Aorta (tissue), 5 donors: ENCODE measurements at regions of chr22 and their contacts with region 1.

Region 1: GRCh38 chr22:44497218-44497904 is 672 bp downstream of the RTL6 start:
- DNase-seq: peak in 1 of 2 donors; percentile 56
- ATAC-seq: peak; percentile 34
- H3K4me3 ChIP-seq: peak overlapping the region; percentile 35 to 60
- H3K27ac ChIP-seq: no peak overlapping the region
- H3K4me1 ChIP-seq: no peaks in the 10 kb centered on the region
- H3K27me3 ChIP-seq: no peaks in the 10 kb centered on the region

Region 2: DNA sequence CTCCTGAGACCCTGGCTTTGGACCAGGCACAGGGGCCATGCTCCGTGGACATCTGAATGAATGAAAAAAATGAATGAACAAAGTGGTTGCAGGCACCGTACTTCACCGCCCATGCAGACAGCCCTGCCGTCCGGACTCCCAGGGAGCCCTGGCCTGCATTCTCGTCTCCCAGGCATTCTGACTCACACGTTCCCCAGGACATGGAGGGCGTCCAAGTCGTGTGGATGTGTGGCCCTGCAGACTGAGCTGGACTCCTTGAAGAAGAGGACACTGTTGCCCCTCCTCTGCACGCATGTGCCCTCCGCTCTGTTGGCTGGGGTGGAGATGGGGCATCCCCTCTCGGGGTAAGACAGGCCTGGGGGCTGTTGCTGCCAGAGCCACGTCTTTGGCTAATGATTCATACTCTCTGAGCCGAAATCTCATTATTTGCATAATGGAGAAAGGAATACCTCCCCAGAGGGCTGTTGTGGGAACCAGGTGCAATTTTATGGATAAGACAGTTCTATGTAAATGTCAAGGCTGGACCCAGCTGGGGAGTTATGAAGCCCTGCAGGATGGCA is 49.0 kb before region 1 on chr22:
- intact Hi-C with region 1: loop called in 1 of 2 experiments (anchors 5 kb)
- DNase-seq: peak; percentile 88 to 91
- ATAC-seq: peak; percentile 72
- H3K4me3 ChIP-seq: no peak overlapping the region
- H3K27ac ChIP-seq: no peak overlapping the region
- H3K4me1 ChIP-seq: no peaks in the 10 kb centered on the region
- H3K27me3 ChIP-seq: no peaks in the 10 kb centered on the region

Region 3: DNA sequence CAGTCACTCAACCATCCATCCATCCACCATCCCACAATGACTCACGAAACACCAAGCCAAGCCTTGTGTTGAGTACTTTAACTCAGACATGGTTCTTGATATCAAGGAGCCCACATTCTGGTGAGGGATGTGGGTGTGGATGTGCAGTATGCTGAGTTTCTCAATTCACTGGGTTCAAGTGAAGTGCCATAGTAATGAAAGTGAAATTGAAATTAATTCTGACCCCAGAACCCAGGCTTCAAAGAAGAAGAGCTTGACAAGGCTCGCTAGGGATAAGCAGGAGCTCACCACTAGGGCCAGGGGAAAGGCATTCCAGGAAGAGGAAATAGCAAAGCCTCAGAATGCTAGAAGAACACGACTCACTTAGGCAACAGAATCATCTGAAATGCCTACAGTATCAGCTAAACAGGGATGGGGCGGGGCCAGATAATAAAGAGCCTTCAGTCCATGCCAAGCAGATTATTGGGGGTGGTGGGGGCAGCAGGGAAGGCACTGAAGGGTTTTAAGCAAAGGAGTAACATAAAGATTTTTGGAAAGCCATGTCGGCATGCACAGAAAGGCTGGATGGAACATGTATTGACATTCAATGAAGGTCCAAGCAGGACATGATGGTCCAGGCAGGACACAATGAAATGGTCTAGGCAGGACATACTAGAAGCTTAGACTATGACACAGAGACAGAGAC is 36.5 kb before region 1 on chr22:
- intact Hi-C with region 1: no loop called
- DNase-seq: no peak
- ATAC-seq: no peak
- H3K4me3 ChIP-seq: no peak overlapping the region
- H3K27ac ChIP-seq: no peak overlapping the region
- H3K4me1 ChIP-seq: no peaks in the 10 kb centered on the region
- H3K27me3 ChIP-seq: no peaks in the 10 kb centered on the region